MCF 10A (cell line): ENCODE measurements at regions of chr11 and their contacts with region 1.

Region 1: GRCh38 chr11:62556108-62556871 is 9.7 kb upstream of the AHNAK start:
- DNase-seq: peak; percentile 97
- H3K4me3 Mint-ChIP-seq: peak overlapping the region; percentile 70
- H3K27ac Mint-ChIP-seq: peak overlapping the region; percentile 95
- H3K4me1 Mint-ChIP-seq: peaks cover 66% of the 10 kb centered on the region
- H3K27me3 Mint-ChIP-seq: no peaks in the 10 kb centered on the region
- CTCF ChIP-seq: no peak

Region 2: DNA sequence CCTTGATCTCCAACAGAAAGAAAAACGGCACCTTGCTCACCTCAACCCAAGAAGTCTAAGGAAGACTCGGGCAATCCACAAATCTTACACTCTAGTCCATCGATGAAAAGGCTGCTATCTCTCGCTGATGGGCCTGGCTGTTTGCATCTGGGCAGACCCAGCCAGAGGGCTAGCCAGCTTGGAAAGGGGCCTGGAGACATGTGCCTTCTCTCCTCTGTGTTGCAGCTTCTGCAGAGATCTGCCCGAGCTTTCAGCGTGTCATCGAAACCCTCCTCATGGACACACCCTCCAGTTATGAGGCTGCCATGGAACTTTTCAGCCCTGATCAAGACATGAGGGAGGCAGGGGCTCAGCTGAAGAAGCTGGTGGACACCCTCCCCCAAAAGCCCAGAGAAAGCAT is 134.3 kb before region 1 on chr11:
- CTCF ChIA-PET with region 1: interaction called, 43 read pairs
- POLR2A ChIA-PET with region 1: interaction called, 11 read pairs
- intact Hi-C with region 1: loop called (anchors 1 kb)
- DNase-seq: no peak
- H3K4me3 Mint-ChIP-seq: no peak overlapping the region
- H3K27ac Mint-ChIP-seq: no peak overlapping the region
- H3K4me1 Mint-ChIP-seq: no peaks in the 10 kb centered on the region
- H3K27me3 Mint-ChIP-seq: no peaks in the 10 kb centered on the region
- CTCF ChIP-seq: no peak

Region 3: GRCh38 chr11:62508268-62509058 is 47.8 kb before region 1 on chr11:
- CTCF ChIA-PET with region 1: interaction called, 10 read pairs
- POLR2A ChIA-PET with region 1: interaction called, 13 read pairs
- intact Hi-C with region 1: no loop called
- DNase-seq: peak; percentile 60
- H3K4me3 Mint-ChIP-seq: peak overlapping the region; percentile 51
- H3K27ac Mint-ChIP-seq: peak overlapping the region; percentile 88
- H3K4me1 Mint-ChIP-seq: peaks cover 8% of the 10 kb centered on the region
- H3K27me3 Mint-ChIP-seq: no peaks in the 10 kb centered on the region
- CTCF ChIP-seq: peak; percentile 29

Region 4: DNA sequence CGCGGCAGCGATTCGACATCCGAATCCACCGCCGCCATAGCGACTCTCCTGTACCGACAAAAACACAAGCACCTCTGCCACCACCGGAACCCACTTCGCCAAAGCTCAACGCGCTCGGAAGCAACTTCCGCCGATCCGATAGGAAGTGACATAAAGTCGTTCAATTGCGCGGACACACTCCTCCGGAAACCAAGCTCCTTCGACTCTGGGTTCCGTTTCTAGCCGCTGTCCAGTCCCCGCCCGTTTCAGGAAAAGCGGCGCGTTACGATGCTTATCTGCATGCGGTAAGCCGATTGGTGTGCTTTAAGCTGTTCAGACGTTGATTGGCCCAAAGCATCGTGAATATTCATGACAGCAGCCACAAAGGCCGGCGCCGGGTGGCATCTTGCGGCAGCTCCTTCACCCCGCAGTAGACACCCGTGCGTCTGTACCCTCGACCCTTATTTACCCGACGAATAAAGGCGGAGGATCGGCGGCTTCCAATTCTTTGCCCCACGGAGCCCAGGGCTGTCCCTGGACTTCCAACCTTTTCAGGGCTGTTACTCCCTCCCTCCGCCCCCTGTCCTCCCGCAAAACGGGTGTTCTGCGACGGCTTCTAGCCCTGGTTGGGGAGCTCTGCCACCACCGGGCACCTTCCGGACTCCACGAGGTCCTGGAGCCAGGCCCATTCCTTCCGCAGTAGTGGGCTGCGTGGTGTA is 35.3 kb after region 1 on chr11 and contains the start of gene TUT1:
- CTCF ChIA-PET with region 1: interaction called, 7 read pairs
- POLR2A ChIA-PET with region 1: interaction called, 121 read pairs
- intact Hi-C with region 1: no loop called
- DNase-seq: peak; percentile 99
- H3K4me3 Mint-ChIP-seq: peak within 1 kb of the TSS; percentile 96
- H3K27ac Mint-ChIP-seq: peak within 1 kb of the TSS; percentile 95
- H3K4me1 Mint-ChIP-seq: peaks cover 12% of the 10 kb centered on the region
- H3K27me3 Mint-ChIP-seq: no peaks in the 10 kb centered on the region
- CTCF ChIP-seq: no peak
- total RNA-seq, gene TUT1: 26.0 and 28.3 TPM in 2 replicates

Region 5: DNA sequence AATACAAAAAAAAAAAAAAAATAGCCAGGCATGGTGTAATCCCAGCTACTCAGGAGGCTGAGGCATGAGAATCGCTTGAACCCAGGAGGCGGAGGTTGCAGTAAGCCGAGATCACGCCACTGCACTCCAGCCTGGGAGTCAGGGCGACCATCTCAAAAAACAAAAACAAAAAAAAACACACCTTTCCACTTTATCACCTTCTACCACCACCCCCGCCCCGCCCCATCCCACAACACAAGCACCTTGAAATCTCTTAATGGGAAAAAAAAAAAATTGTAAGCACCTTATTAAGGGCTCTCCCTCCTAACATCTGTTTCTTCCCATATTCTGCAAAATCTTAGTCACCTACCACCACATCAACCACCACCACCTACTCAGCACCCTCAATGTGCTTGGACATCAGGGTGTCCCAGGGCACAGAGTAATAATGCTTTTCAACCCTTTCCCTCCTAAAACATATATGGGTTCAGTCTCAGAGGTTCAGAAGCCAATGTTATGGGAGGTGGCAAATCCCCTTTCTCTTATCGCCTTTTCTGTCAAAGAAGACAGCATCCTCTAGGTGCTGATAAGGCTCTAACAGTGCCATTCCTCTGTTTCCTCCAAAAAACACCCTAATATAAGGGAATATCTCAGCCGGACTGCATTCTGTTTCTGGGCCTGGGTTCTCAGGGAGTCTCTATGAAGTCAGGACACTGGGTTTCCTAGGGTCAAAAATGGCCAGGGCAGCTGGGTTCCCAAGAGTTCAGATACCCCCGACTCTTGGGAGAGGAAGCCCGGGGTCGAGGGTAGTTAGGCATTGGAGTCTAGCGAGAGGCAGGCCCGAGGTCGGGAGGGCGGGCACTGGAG is 96.1 kb after region 1 on chr11:
- CTCF ChIA-PET with region 1: interaction called, 3 read pairs
- POLR2A ChIA-PET with region 1: interaction called, 10 read pairs
- intact Hi-C with region 1: no loop called
- DNase-seq: no peak
- H3K4me3 Mint-ChIP-seq: peak overlapping the region; percentile 93
- H3K27ac Mint-ChIP-seq: peak overlapping the region; percentile 96
- H3K4me1 Mint-ChIP-seq: peaks cover 14% of the 10 kb centered on the region
- H3K27me3 Mint-ChIP-seq: no peaks in the 10 kb centered on the region
- CTCF ChIP-seq: no peak

Region 6: GRCh38 chr11:62863687-62864180 is 307.4 kb after region 1 on chr11:
- CTCF ChIA-PET with region 1: no interaction called
- POLR2A ChIA-PET with region 1: no interaction called
- intact Hi-C with region 1: no loop called
- DNase-seq: no peak
- H3K4me3 Mint-ChIP-seq: no peak overlapping the region
- H3K27ac Mint-ChIP-seq: no peak overlapping the region
- H3K4me1 Mint-ChIP-seq: peaks cover 9% of the 10 kb centered on the region
- H3K27me3 Mint-ChIP-seq: no peaks in the 10 kb centered on the region
- CTCF ChIP-seq: no peak